Activated T-helper 2 cell treated with anti-CD3 and anti-CD28 coated beads, Interferon-gamma antibody, Interleukin-2, Interleukin-4, amounts not matched to agents 10 μg/mL and 5 μg/mL and 100 μg/mL, durations not matched to agents 14 hours and 24 hours and 36 hours (primary cell): ENCODE measurements at regions of chr10 and their contacts with region 1.

Region 1: GRCh38 chr10:19819419-19820033 is 3.3 kb downstream of the PLXDC2 start:
- DNase-seq: no peak
- H3K4me3 Mint-ChIP-seq: no peak overlapping the region
- H3K27ac Mint-ChIP-seq: no peak overlapping the region
- H3K4me1 Mint-ChIP-seq: no peaks in the 10 kb centered on the region
- H3K27me3 Mint-ChIP-seq: peaks cover 31% of the 10 kb centered on the region

Region 2: DNA sequence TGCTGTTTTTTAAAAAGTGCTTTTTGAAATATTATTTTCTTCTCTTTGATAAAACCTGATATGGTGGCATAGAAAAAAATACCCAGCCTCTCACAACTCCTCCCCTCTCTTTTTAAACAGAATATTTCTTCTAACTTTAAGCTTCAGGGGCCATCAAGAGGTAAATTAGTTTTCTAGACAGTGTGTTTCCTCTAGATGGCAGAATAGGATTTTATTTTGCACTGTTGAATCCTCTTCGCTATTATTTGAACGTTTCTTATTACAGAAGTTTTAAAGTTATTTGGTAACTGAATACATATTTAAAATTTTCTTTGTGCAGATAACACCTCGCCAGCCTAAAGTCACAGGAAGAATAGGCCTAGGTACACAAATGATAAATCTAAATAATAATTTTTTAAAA is 1130.0 kb before region 1 on chr10:
- intact Hi-C with region 1: loop called (anchors 10 kb)
- DNase-seq: no peak
- H3K4me3 Mint-ChIP-seq: no peak overlapping the region
- H3K27ac Mint-ChIP-seq: no peak overlapping the region
- H3K4me1 Mint-ChIP-seq: peaks cover 8% of the 10 kb centered on the region
- H3K27me3 Mint-ChIP-seq: peaks cover 7% of the 10 kb centered on the region

Region 3: GRCh38 chr10:19921300-19922140 is 102.0 kb after region 1 on chr10:
- intact Hi-C with region 1: no loop called
- DNase-seq: no peak
- H3K4me3 Mint-ChIP-seq: no peak overlapping the region
- H3K27ac Mint-ChIP-seq: no peak overlapping the region
- H3K4me1 Mint-ChIP-seq: no peaks in the 10 kb centered on the region
- H3K27me3 Mint-ChIP-seq: no peaks in the 10 kb centered on the region